SK-N-SH (cell line): ENCODE measurements at regions of chr6 and their contacts with region 1.

Region 1: DNA sequence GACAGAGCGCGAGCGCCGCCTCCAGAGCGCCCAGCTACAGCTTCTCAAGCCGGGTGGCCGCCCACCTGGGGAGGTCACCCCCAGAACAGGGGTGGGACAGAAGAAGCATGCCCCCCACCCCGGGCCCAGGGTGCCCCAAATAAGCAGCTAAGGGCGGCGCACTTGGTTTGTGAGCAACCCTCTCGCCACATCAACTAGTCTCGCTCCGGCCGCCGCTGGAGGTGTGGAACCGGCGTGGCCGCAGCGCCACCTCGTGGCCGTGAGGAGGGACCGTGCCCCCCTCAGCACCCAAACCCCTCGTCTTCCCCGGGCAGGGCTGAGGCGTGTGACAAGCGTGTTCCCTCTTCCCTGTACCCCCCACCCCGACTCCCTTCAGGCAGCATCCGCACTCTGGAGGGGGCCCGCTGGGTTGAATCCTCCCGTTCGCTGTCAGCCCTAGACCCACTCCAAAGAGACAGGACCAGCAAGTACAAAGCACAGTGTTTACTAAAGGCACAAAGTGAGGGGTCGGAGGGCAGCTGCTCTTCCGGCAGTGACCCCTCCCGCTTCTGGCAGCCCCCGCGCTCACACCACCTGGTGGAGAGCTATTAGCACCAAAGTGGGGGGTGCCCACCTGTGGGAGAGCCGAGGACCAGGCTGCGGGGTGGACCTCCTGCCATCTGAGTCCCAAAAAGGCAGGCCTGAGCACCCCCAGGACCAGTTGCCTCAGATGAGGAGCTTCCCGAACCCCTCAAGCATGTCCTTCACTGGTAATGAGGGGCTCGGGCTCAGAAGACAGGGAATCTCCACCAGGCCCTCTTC is 45.4 kb downstream of the MDFI start:
- DNase-seq: peak; percentile 96
- H3K4me3 ChIP-seq: peak overlapping the region in 1 of 2 experiments; percentile 35; a peak in 1 of 4 replicates
- H3K27ac ChIP-seq: no peak overlapping the region
- H3K4me1 ChIP-seq: peaks cover 11 to 14% of the 10 kb centered on the region in 2 experiments; a peak in 3 of 4 replicates
- H3K27me3 ChIP-seq: no peaks in the 10 kb centered on the region
- CTCF ChIP-seq: peak; percentile 89
- EP300 ChIP-seq: no peak
- RAD21 ChIP-seq: peak; percentile 91

Region 2: DNA sequence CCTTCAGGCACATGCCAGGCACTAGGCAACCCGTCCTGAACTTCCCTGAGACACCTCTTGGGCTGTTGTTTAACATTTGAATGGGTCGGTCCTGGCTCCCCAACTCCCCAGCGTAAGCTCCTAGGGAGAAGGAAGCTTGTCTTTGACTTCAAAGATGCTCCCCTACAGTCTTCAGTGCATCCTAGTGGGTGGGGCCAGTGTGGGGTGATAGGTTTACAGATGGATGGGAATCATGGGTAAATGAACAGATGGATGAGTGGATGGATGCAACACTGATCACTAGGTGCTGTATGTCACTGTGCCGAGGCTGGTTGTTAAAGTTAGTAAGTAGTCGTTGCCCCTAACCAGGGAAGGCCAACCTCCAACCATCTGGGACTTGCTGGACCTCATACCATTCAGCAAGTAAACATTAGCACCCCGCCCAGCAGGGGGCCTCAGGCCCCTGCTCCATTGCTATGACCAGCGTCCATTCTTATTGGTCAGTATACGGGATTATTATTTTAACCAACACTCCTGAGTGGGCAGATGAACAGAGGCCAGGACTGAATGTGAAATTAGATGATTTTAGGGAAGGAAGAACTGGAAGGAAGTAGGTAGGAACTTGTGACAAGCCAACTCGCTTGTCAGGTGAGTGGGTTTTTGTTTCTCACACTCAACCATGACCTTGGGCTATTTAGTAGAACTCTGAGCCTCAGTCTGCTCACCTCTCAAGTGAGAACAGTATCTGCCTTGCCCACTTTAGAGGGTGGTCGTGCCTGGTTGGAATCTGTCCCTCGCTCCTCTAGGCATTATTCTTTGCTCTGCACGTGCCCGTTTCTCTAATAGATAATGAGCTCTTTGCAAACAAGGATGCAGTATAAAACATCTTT is 220.4 kb before region 1 on chr6:
- CTCF ChIA-PET with region 1: interaction called, 33 read pairs
- POLR2A ChIA-PET with region 1: no interaction called
- DNase-seq: peak; percentile 83
- H3K4me3 ChIP-seq: no peak overlapping the region; a peak in 1 of 4 replicates
- H3K27ac ChIP-seq: no peak overlapping the region
- H3K4me1 ChIP-seq: peaks cover 0 to 5% of the 10 kb centered on the region in 2 experiments; a peak in 1 of 4 replicates
- H3K27me3 ChIP-seq: no peaks in the 10 kb centered on the region
- CTCF ChIP-seq: peak; percentile 71
- EP300 ChIP-seq: no peak
- RAD21 ChIP-seq: peak; percentile 93

Region 3: GRCh38 chr6:41602864-41603608 is 80.7 kb before region 1 on chr6:
- CTCF ChIA-PET with region 1: interaction called, 504 read pairs
- POLR2A ChIA-PET with region 1: interaction called, 3 read pairs
- DNase-seq: peak; percentile 90
- H3K4me3 ChIP-seq: peak overlapping the region; percentile 17 to 54; a peak in 3 of 4 replicates
- H3K27ac ChIP-seq: peak overlapping the region; percentile 3 to 36; a peak in 1 of 4 replicates
- H3K4me1 ChIP-seq: peaks cover 0 to 7% of the 10 kb centered on the region in 2 experiments; a peak in 1 of 4 replicates
- H3K27me3 ChIP-seq: no peaks in the 10 kb centered on the region
- CTCF ChIP-seq: peak; percentile 95
- EP300 ChIP-seq: no peak
- RAD21 ChIP-seq: peak; percentile 93

Region 4: GRCh38 chr6:41634657-41635056 is 49.1 kb before region 1 on chr6:
- CTCF ChIA-PET with region 1: interaction called, 17 read pairs
- POLR2A ChIA-PET with region 1: no interaction called
- DNase-seq: peak; percentile 90
- H3K4me3 ChIP-seq: no peak overlapping the region
- H3K27ac ChIP-seq: peak overlapping the region in 1 of 2 experiments; percentile 7; a peak in 2 of 4 replicates
- H3K4me1 ChIP-seq: peaks cover 0 to 29% of the 10 kb centered on the region in 2 experiments; a peak in 1 of 4 replicates
- H3K27me3 ChIP-seq: peaks cover 5% of the 10 kb centered on the region; the same call in 1 of the 2 replicates
- CTCF ChIP-seq: no peak
- EP300 ChIP-seq: no peak; a peak in 1 of 4 replicates
- RAD21 ChIP-seq: no peak

Region 5: GRCh38 chr6:41694815-41695526 is 11.3 kb after region 1 on chr6:
- CTCF ChIA-PET with region 1: interaction called, 57 read pairs
- POLR2A ChIA-PET with region 1: no interaction called
- DNase-seq: no peak
- H3K4me3 ChIP-seq: no peak overlapping the region
- H3K27ac ChIP-seq: no peak overlapping the region
- H3K4me1 ChIP-seq: peaks cover 19 to 30% of the 10 kb centered on the region in 2 experiments
- H3K27me3 ChIP-seq: no peaks in the 10 kb centered on the region
- CTCF ChIP-seq: no peak; the same call in 1 of the 2 replicates
- EP300 ChIP-seq: no peak
- RAD21 ChIP-seq: no peak

Region 6: DNA sequence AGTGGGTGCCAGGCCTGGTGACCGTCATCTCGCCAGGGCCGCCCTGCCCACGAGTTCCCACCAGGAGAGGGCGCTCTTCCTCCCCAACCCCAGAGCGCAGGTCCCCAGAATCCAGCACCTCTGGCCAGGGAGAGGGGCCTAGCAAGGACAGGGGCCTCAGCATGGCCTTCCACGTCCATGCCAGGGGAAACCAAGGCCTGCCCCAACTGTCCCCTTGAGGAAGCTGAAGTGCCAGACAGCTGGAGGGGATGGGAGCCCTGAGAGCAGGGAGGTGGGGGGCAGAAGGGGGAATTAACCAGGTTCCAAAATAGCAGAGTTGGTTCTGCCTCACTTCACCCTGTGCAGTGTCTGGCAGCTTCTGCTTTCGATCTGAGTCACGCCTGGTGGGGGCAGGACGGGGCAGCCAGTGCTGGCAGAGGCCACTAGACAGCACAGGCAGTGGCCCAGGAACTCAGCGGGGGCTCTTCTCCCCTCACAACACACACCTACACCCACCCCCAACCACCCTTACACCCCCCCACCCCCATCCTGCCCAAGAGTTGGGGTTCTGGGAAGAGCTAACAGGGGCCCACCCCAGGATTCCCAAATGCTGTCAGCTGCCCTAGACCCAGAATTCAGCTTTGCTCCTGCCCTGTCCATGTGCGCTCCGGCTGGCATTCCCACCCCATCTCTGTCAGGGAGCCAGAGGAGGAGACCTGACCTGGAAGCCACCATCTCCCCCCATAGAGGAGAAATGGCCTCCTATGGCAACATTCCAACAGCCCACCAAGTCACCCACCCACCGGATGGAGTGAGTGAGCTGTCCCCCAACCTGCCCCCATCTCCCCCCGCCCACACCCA is 22.5 kb after region 1 on chr6:
- CTCF ChIA-PET with region 1: interaction called, 17 read pairs
- POLR2A ChIA-PET with region 1: no interaction called
- DNase-seq: peak; percentile 80
- H3K4me3 ChIP-seq: peak overlapping the region in 1 of 2 experiments; percentile 13; a peak in 1 of 4 replicates
- H3K27ac ChIP-seq: peak overlapping the region; percentile 56 to 83; a peak in 3 of 4 replicates
- H3K4me1 ChIP-seq: peaks cover 17 to 31% of the 10 kb centered on the region in 2 experiments; a peak in 3 of 4 replicates
- H3K27me3 ChIP-seq: no peaks in the 10 kb centered on the region
- CTCF ChIP-seq: peak; percentile 86
- EP300 ChIP-seq: no peak
- RAD21 ChIP-seq: peak; percentile 54

Region 7: GRCh38 chr6:41735427-41736356 is 52.0 kb after region 1 on chr6 and contains the start of gene TFEB:
- CTCF ChIA-PET with region 1: interaction called, 12 read pairs
- POLR2A ChIA-PET with region 1: no interaction called
- DNase-seq: peak; percentile 96
- H3K4me3 ChIP-seq: peak within 1 kb of the TSS; percentile 71 to 72
- H3K27ac ChIP-seq: peak within 1 kb of the TSS; percentile 81 to 96; a peak in 3 of 4 replicates
- H3K4me1 ChIP-seq: peaks cover 23 to 31% of the 10 kb centered on the region in 2 experiments
- H3K27me3 ChIP-seq: no peaks in the 10 kb centered on the region
- CTCF ChIP-seq: peak; percentile 74
- EP300 ChIP-seq: peak in 1 of 2 experiments; percentile 16; a peak in 1 of 4 replicates
- RAD21 ChIP-seq: peak; percentile 63
- polyA plus RNA-seq, gene TFEB: 6.2 and 6.7 TPM in 2 replicates